ENCODE measurements at regions of chr5 and their contacts with region 1.

Region 1: DNA sequence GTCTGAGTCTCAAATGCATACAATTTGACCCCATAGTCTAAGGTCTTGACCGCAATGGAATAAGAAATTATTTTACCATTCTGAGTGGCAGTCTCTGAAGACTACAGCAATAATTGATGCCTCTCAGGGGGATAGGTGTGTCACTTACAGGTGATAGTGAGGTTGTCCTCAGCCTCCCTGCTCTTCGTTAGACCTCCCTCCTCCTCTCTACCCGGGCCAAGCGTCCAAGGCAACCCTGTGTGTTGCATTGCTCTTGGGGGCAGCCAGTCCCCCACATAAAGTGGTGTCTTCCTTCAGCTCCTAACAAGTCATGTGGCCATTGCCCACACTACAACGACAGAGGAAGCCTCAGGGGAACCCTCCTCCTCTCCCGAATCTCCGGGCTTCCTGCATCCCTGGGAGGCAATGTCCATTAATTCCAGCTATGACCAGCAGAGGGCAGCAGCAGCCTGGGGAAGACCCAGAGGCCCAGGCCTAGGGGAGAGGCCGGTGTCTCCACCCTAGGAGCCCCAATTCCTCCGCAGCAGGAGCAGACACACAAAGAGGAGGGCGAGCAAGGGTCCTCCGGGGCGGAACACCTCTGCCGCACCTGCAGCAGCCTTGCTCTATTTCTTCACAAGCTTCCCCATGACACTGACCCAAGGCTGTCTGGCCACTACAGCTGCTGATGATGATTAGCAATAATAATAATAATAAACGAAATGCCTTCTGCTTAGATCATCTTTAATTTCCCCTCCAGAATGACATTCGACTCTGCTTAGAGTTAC is 134.8 kb downstream of the KCNIP1 start:
- DNase-seq: peak; percentile 78
- ATAC-seq: peak; percentile 74
- H3K4me3 Mint-ChIP-seq: no peak overlapping the region
- H3K27ac Mint-ChIP-seq: no peak overlapping the region
- H3K4me1 Mint-ChIP-seq: peaks cover 6% of the 10 kb centered on the region
- H3K27me3 Mint-ChIP-seq: peaks cover 9% of the 10 kb centered on the region
- CTCF ChIP-seq: peak; percentile 89

Region 2: GRCh38 chr5:170651604-170652277 is 13.1 kb after region 1 on chr5:
- CTCF ChIA-PET with region 1: interaction called, 15 read pairs
- POLR2A ChIA-PET with region 1: no interaction called
- intact Hi-C with region 1: no loop called
- DNase-seq: no peak
- ATAC-seq: no peak
- H3K4me3 Mint-ChIP-seq: no peak overlapping the region
- H3K27ac Mint-ChIP-seq: no peak overlapping the region
- H3K4me1 Mint-ChIP-seq: no peaks in the 10 kb centered on the region
- H3K27me3 Mint-ChIP-seq: peaks cover 7% of the 10 kb centered on the region
- CTCF ChIP-seq: no peak

Region 3: GRCh38 chr5:170791325-170791954 is 152.8 kb after region 1 on chr5:
- CTCF ChIA-PET with region 1: interaction called, 10 read pairs
- POLR2A ChIA-PET with region 1: no interaction called
- intact Hi-C with region 1: no loop called
- DNase-seq: peak; percentile 43
- ATAC-seq: no peak
- H3K4me3 Mint-ChIP-seq: no peak overlapping the region
- H3K27ac Mint-ChIP-seq: no peak overlapping the region
- H3K4me1 Mint-ChIP-seq: no peaks in the 10 kb centered on the region
- H3K27me3 Mint-ChIP-seq: no peaks in the 10 kb centered on the region
- CTCF ChIP-seq: no peak